Left lung (tissue), 14 donors: ENCODE measurements at regions of chr11 and their contacts with region 1.

Region 1: GRCh38 chr11:84384731-84385130 is 1098.6 kb upstream of the CCDC90B start:
- DNase-seq: peak in 2 of 4 donors; percentile 8 to 46
- ATAC-seq: peak; percentile 79
- H3K4me3 ChIP-seq: no peak overlapping the region
- H3K27ac ChIP-seq: no peak overlapping the region
- H3K4me1 ChIP-seq: no peaks in the 10 kb centered on the region
- H3K27me3 ChIP-seq: no peaks in the 10 kb centered on the region
- CTCF ChIP-seq: peak; percentile 62 to 64

Region 2: GRCh38 chr11:83836883-83837654 is 547.7 kb before region 1 on chr11:
- intact Hi-C with region 1: loop called in 1 of 2 experiments (anchors 5 kb)
- DNase-seq: peak in 2 of 4 donors; percentile 24 to 64
- ATAC-seq: peak; percentile 95
- H3K4me3 ChIP-seq: no peak overlapping the region
- H3K27ac ChIP-seq: no peak overlapping the region
- H3K4me1 ChIP-seq: peaks cover 0 to 4% of the 10 kb centered on the region in 2 donors
- H3K27me3 ChIP-seq: no peaks in the 10 kb centered on the region
- CTCF ChIP-seq: peak; percentile 41 to 71

Region 3: GRCh38 chr11:84313830-84314359 is 70.8 kb before region 1 on chr11:
- intact Hi-C with region 1: no loop called
- DNase-seq: no peak
- ATAC-seq: peak; percentile 39
- H3K4me3 ChIP-seq: no peak overlapping the region
- H3K27ac ChIP-seq: no peak overlapping the region
- H3K4me1 ChIP-seq: no peaks in the 10 kb centered on the region
- H3K27me3 ChIP-seq: no peaks in the 10 kb centered on the region
- CTCF ChIP-seq: no peak